ENCODE measurements at regions of chr7 and their contacts with region 1.

Region 1: DNA sequence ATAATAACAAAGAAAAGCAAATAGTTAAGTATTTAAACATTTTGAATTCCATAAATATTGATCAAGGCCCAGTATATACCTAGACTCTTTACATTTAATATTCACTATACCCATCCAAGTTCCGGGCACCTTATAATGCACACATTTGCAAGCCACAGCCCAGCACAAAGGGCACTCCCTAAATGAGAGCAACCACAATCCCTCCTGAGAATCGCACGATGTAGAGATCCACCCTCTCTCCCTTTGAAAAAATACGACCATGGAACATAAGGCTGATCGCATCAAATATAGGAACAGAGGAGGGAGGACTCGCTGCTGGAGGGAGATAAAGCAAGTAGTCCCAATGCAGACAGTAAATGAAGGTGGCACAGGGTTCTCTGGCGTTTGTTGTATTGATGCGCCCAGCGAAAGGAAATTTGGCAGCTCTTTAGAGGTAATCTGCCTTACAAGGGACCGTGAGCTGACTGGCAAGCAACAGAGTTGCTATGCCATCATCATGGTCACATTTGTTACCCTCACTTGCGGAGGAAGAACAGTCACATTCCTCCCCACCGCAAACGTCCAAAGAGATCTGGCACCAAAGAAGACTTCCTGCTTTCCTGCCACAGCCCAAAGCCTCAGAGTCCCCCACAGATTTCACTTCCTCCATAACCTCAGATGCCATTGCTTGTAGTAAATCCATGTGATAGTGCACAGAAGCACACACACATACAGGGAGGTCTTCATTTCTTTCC is 16.1 kb upstream of the TAS2R40 start:
- DNase-seq: peak in 1 of 2 donors; percentile 23
- ATAC-seq: peak in 7 of 8 donors; percentile 33 to 80 (median 55)
- H3K4me3 ChIP-seq: peak overlapping the region in 1 of 10 donors; percentile 10
- H3K27ac ChIP-seq: no peak overlapping the region
- H3K4me1 ChIP-seq: peaks cover 0 to 14% (median 0%) of the 10 kb centered on the region in 9 donors
- H3K27me3 ChIP-seq: peaks cover 0 to 4% (median 0%) of the 10 kb centered on the region in 7 donors
- CTCF ChIP-seq: no peak

Region 2: DNA sequence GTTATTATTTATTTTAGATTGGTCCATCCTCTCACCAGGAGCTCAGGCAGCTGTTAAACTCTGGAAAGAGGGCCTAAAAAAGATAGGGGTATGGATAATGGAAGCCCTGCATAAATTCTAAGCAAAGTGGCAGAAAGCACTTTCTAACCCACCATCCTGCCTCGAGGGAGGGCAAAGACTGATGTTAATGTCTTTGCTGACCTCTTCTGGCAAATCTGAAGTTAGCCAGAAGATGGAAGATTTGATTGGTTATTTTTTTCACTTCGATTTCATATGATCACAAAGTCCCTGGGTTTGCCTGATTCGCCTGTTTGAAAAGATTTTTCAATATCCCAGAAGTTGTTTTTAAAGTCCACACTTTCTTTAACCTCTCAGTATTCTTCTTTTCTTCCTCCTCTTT is 203.6 kb before region 1 on chr7:
- intact Hi-C with region 1: loop called in 1 of 10 experiments (anchors 1 kb)
- DNase-seq: no peak
- ATAC-seq: no peak
- H3K4me3 ChIP-seq: no peak overlapping the region
- H3K27ac ChIP-seq: no peak overlapping the region
- H3K4me1 ChIP-seq: peaks cover 0 to 6% (median 0%) of the 10 kb centered on the region in 9 donors
- H3K27me3 ChIP-seq: peaks cover 0 to 7% (median 0%) of the 10 kb centered on the region in 7 donors
- CTCF ChIP-seq: peak in 2 of 9 donors; percentile 14 to 37